Natural killer cell (primary cell): ENCODE measurements at regions of chr6 and their contacts with region 1.

Region 1: DNA sequence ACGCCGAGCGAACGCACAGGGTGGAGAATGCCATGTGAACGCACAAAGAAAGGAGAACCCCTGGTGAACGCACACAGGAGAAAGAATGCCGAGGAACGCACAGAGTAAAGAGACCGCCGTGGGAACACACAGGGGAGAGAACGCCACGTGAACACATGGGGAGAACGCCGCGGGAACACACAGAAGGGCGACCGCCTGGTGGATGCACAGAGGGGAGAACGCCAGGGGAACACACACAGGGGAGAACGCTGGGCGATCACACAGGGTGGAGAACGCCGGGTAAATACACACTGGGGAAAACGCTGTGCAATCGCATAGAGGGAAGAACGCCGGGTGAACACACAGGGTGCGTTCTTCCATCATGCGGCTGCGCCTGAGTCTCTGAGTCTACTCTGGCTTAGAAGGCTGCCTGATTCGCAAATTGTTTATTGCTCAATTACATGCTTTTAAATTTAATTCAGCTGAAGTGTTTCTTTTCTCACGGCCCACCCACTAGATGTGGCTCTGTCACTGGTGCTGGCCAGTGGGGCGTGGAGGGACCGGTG is 54.1 kb downstream of the RNASET2 start:
- DNase-seq: no peak
- ATAC-seq: no peak
- H3K4me3 ChIP-seq: no peak overlapping the region
- H3K4me3 Mint-ChIP-seq: no peak overlapping the region
- H3K27ac ChIP-seq: no peak overlapping the region
- H3K27ac Mint-ChIP-seq: no peak overlapping the region
- H3K4me1 ChIP-seq: peaks cover 7% of the 10 kb centered on the region
- H3K4me1 Mint-ChIP-seq: peaks cover 5 to 21% of the 10 kb centered on the region in 2 donors
- H3K27me3 ChIP-seq: no peaks in the 10 kb centered on the region
- H3K27me3 Mint-ChIP-seq: no peaks in the 10 kb centered on the region
- CTCF ChIP-seq: no peak

Region 2: GRCh38 chr6:166615059-166615770 is 287.1 kb before region 1 on chr6:
- intact Hi-C with region 1: no loop called
- DNase-seq: no peak
- ATAC-seq: no peak
- H3K4me3 ChIP-seq: no peak overlapping the region
- H3K4me3 Mint-ChIP-seq: no peak overlapping the region
- H3K27ac ChIP-seq: no peak overlapping the region
- H3K27ac Mint-ChIP-seq: no peak overlapping the region
- H3K4me1 ChIP-seq: no peaks in the 10 kb centered on the region
- H3K4me1 Mint-ChIP-seq: no peaks in the 10 kb centered on the region
- H3K27me3 ChIP-seq: no peaks in the 10 kb centered on the region
- H3K27me3 Mint-ChIP-seq: peaks cover 2 to 4% of the 10 kb centered on the region in 2 donors
- CTCF ChIP-seq: no peak

Region 3: GRCh38 chr6:166855416-166855815 is 46.9 kb before region 1 on chr6:
- intact Hi-C with region 1: loop called (anchors 1 kb)
- DNase-seq: no peak
- ATAC-seq: no peak
- H3K4me3 ChIP-seq: no peak overlapping the region
- H3K4me3 Mint-ChIP-seq: no peak overlapping the region
- H3K27ac ChIP-seq: no peak overlapping the region
- H3K27ac Mint-ChIP-seq: no peak overlapping the region
- H3K4me1 ChIP-seq: no peaks in the 10 kb centered on the region
- H3K4me1 Mint-ChIP-seq: no peaks in the 10 kb centered on the region
- H3K27me3 ChIP-seq: no peaks in the 10 kb centered on the region
- H3K27me3 Mint-ChIP-seq: peaks cover 6 to 24% of the 10 kb centered on the region in 2 donors
- CTCF ChIP-seq: no peak